Motor neuron (in vitro differentiated cells): ENCODE measurements at regions of chr5 and their contacts with region 1.

Region 1: DNA sequence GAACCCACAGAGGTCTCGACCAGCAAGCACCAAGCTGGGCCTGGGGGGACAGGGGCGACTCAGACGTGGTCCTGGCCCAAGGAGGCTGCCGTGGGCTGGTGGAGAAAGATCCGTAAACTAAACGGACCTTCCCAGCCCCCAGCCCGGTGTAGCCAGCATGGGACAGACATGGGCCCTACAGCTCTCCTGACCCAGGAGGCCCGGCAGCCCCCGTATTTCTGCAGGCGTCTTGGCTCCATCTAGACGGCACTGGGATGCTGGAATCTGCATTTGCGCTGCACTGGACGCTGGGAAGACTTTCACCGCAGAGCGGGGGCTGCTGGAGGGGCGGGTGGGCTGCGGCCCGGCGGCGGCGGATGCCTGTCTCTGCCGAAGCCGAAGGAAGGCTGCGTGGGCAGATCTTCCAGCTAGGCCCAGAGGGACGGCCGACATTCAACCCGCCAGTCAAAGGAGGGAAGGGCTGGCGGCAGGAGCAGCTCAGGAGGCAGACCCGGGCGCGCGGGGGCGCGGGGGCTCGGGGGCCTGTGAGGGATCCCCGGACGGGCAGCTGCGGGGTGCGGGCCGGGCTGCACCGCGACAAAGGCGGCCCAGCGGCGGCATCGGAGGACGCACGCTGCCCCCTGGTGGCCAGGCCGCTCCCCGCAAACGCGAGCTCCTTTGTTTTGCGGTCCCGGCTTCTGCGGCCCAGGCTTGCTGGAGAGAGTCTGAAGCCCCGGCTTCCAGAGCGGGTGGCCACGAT is 266.2 kb downstream of the NSG2 start:
- ATAC-seq: peak; percentile 85 to 97 (median 92)
- H3K4me3 ChIP-seq: peak overlapping the region; percentile 16 to 35 (median 23)
- H3K27ac ChIP-seq: no peak overlapping the region
- H3K4me1 ChIP-seq: peaks cover 5 to 20% of the 10 kb centered on the region in 2 donors

Region 2: GRCh38 chr5:173615884-173616576 is 695.7 kb before region 1 on chr5:
- in situ Hi-C with region 1: loop called (anchors 10 to 25 kb)
- ATAC-seq: peak; percentile 47 to 73 (median 61)
- H3K4me3 ChIP-seq: peak overlapping the region; percentile 66 to 85 (median 70)
- H3K27ac ChIP-seq: peak overlapping the region; percentile 94 to 99
- H3K4me1 ChIP-seq: peaks cover 17 to 18% of the 10 kb centered on the region in 2 donors

Region 3: GRCh38 chr5:173625696-173626504 is 685.8 kb before region 1 on chr5:
- in situ Hi-C with region 1: loop called (anchors 10 to 25 kb)
- ATAC-seq: peak; percentile 28 to 93 (median 70)
- H3K4me3 ChIP-seq: no peak overlapping the region
- H3K27ac ChIP-seq: no peak overlapping the region
- H3K4me1 ChIP-seq: peaks cover 30 to 32% of the 10 kb centered on the region in 2 donors

Region 4: DNA sequence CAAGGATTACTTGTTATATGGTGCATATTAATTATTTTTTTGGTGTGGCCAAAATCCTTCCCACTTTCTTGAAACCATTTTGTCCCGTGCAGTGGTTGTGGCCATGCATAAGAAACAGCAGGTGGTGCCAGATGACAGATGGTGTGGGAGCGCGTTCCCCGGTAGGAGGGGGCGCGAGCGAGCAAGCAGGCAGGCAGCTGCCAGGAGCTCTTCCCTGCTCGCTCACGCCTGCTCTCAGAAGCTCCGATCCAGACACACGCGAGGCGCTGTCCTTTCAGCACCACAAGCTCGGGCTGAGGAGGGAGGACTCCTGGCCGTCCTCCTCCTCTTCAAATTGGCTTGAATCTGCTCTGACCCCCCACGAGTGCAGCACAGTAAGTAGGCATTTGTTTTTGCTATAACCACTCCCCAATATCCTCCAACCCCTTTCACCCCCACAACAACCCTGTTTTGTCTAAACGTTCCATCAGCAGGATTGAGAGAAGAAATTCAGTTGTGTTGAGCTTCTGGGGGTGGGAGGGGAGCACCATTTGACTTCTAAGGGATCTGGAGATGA is 266.2 kb before region 1 on chr5 and contains the start of gene NSG2:
- in situ Hi-C with region 1: loop called in 8 of 9 experiments (anchors 5 to 25 kb)
- ATAC-seq: peak; percentile 99 to 100 (median 100)
- H3K4me3 ChIP-seq: peak within 1 kb of the TSS; percentile 26 to 45 (median 40)
- H3K27ac ChIP-seq: no peak within 1 kb of the TSS
- H3K4me1 ChIP-seq: peaks cover 0 to 26% of the 10 kb centered on the region in 2 donors
- total RNA-seq, gene NSG2: 0.51 to 186 (median 119) TPM in 7 of 8 experiments, not detected in the other

Region 5: GRCh38 chr5:174056064-174056847 is 255.4 kb before region 1 on chr5:
- in situ Hi-C with region 1: loop called in 3 of 9 experiments (anchors 10 to 25 kb)
- ATAC-seq: no peak
- H3K4me3 ChIP-seq: no peak overlapping the region
- H3K27ac ChIP-seq: no peak overlapping the region
- H3K4me1 ChIP-seq: peaks cover 0 to 10% of the 10 kb centered on the region in 2 donors

Region 6: DNA sequence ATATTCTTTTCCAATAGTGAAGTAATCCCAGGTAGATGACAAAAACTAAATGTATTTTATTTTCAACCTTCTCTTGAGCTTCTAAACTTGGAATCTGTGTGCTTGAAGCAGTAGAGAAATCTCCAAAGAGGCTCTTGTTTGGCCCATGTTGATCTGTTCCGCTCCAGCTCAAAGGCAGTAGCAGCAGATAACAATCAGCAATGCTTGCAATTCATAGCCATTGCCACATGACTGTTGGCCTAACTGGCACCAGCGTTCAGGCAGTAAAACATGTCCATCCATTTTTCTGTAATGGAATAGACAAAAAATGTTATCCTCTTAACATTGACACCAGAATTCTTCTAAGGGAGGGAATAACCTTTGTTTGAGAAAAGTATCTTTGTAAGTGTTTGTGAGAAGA is 142.0 kb after region 1 on chr5:
- in situ Hi-C with region 1: no loop called
- ATAC-seq: no peak
- H3K4me3 ChIP-seq: no peak overlapping the region
- H3K27ac ChIP-seq: no peak overlapping the region
- H3K4me1 ChIP-seq: no peaks in the 10 kb centered on the region

Region 7: DNA sequence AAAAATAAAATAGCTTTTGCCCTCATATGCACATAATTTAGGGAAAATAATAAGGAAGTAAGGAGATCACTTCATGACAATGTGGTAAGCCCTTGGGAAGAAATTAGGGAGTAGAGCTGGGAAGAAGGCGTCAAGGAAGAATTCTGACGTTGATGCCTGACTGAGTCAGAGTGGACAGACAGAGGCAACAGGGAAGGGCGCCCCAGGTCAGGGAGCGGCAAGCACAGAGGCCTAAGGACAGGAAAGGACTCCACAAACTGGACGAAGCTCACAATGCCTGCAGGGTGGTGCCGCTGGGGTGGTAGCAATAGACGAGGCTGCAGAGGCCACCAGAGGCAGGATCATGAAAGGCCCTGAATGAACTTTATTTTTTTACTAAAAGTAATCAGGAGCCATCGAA is 1124.7 kb after region 1 on chr5:
- in situ Hi-C with region 1: no loop called
- ATAC-seq: peak in 3 of 8 experiments; percentile 96 to 98 (median 97)
- H3K4me3 ChIP-seq: no peak overlapping the region
- H3K27ac ChIP-seq: no peak overlapping the region
- H3K4me1 ChIP-seq: no peaks in the 10 kb centered on the region